Naive thymus-derived CD4-positive, alpha-beta T cell (primary cell): ENCODE measurements at regions of chr6 and their contacts with region 1.

Region 1: GRCh38 chr6:87589693-87590549 is at the starts of genes ORC3 and RARS2:
- DNase-seq: peak; percentile 86 to 97 (median 92)
- ATAC-seq: peak; percentile 100
- H3K4me3 ChIP-seq: peak within 1 kb of the TSS; percentile 89
- H3K4me3 Mint-ChIP-seq: peak within 1 kb of the TSS; percentile 87 to 100 (median 96)
- H3K27ac ChIP-seq: peak within 1 kb of the TSS; percentile 92
- H3K27ac Mint-ChIP-seq: peak within 1 kb of the TSS; percentile 87 to 97 (median 95)
- H3K4me1 ChIP-seq: peaks cover 22 to 32% of the 10 kb centered on the region in 2 donors
- H3K4me1 Mint-ChIP-seq: peaks cover 49 to 81% (median 75%) of the 10 kb centered on the region in 7 donors
- H3K27me3 ChIP-seq: no peaks in the 10 kb centered on the region
- H3K27me3 Mint-ChIP-seq: no peaks in the 10 kb centered on the region
- total RNA-seq, gene ORC3: 17.7 to 29.8 (median 27.6) TPM
- total RNA-seq, gene RARS2: 21.0 to 40.0 (median 24.2) TPM

Region 2: GRCh38 chr6:87472525-87473418 is 117.1 kb before region 1 on chr6 and contains the start of gene SLC35A1:
- CTCF ChIA-PET with region 1: no interaction called
- POLR2A ChIA-PET with region 1: interaction called, 9 read pairs
- intact Hi-C with region 1: loop called (anchors 1 kb)
- DNase-seq: peak; percentile 78 to 92 (median 87)
- ATAC-seq: peak; percentile 97
- H3K4me3 ChIP-seq: peak within 1 kb of the TSS; percentile 81
- H3K4me3 Mint-ChIP-seq: peak within 1 kb of the TSS; percentile 88 to 99 (median 98)
- H3K27ac ChIP-seq: peak within 1 kb of the TSS; percentile 93
- H3K27ac Mint-ChIP-seq: peak within 1 kb of the TSS; percentile 95 to 100 (median 99)
- H3K4me1 ChIP-seq: peaks cover 9 to 11% of the 10 kb centered on the region in 2 donors
- H3K4me1 Mint-ChIP-seq: peaks cover 14 to 31% (median 20%) of the 10 kb centered on the region in 7 donors
- H3K27me3 ChIP-seq: no peaks in the 10 kb centered on the region
- H3K27me3 Mint-ChIP-seq: peaks cover 2 to 14% (median 9%) of the 10 kb centered on the region in 5 donors
- total RNA-seq, gene SLC35A1: 10.4 to 23.4 (median 15.6) TPM

Region 3: GRCh38 chr6:87645080-87645479 is 55.2 kb after region 1 on chr6:
- CTCF ChIA-PET with region 1: no interaction called
- POLR2A ChIA-PET with region 1: no interaction called
- intact Hi-C with region 1: loop called in 1 of 2 experiments (anchors 2 kb)
- DNase-seq: peak in 2 of 9 donors; percentile 12 to 30
- ATAC-seq: peak; percentile 40
- H3K4me3 ChIP-seq: peak overlapping the region; percentile 32
- H3K4me3 Mint-ChIP-seq: peak overlapping the region; percentile 30 to 86 (median 78)
- H3K27ac ChIP-seq: no peak overlapping the region
- H3K27ac Mint-ChIP-seq: peak overlapping the region; percentile 49 to 87 (median 78)
- H3K4me1 ChIP-seq: peaks cover 0 to 8% of the 10 kb centered on the region in 2 donors
- H3K4me1 Mint-ChIP-seq: peaks cover 0 to 25% (median 19%) of the 10 kb centered on the region in 7 donors
- H3K27me3 ChIP-seq: no peaks in the 10 kb centered on the region
- H3K27me3 Mint-ChIP-seq: no peaks in the 10 kb centered on the region

Region 4: GRCh38 chr6:87832025-87832825 is 242.3 kb after region 1 on chr6:
- CTCF ChIA-PET with region 1: no interaction called
- POLR2A ChIA-PET with region 1: no interaction called
- intact Hi-C with region 1: loop called in 1 of 2 experiments (anchors 1 kb)
- DNase-seq: peak in 6 of 9 donors; percentile 12 to 50 (median 29)
- ATAC-seq: peak; percentile 81
- H3K4me3 ChIP-seq: peak overlapping the region; percentile 64
- H3K4me3 Mint-ChIP-seq: peak overlapping the region; percentile 69 to 97 (median 89)
- H3K27ac ChIP-seq: peak overlapping the region; percentile 56
- H3K27ac Mint-ChIP-seq: peak overlapping the region; percentile 75 to 95 (median 88)
- H3K4me1 ChIP-seq: no peaks in the 10 kb centered on the region
- H3K4me1 Mint-ChIP-seq: peaks cover 0 to 15% (median 8%) of the 10 kb centered on the region in 7 donors
- H3K27me3 ChIP-seq: no peaks in the 10 kb centered on the region
- H3K27me3 Mint-ChIP-seq: peaks cover 0 to 12% (median 4%) of the 10 kb centered on the region in 5 donors